OCI-LY7 (cell line): ENCODE measurements at regions of chr10 and their contacts with region 1.

Region 1: DNA sequence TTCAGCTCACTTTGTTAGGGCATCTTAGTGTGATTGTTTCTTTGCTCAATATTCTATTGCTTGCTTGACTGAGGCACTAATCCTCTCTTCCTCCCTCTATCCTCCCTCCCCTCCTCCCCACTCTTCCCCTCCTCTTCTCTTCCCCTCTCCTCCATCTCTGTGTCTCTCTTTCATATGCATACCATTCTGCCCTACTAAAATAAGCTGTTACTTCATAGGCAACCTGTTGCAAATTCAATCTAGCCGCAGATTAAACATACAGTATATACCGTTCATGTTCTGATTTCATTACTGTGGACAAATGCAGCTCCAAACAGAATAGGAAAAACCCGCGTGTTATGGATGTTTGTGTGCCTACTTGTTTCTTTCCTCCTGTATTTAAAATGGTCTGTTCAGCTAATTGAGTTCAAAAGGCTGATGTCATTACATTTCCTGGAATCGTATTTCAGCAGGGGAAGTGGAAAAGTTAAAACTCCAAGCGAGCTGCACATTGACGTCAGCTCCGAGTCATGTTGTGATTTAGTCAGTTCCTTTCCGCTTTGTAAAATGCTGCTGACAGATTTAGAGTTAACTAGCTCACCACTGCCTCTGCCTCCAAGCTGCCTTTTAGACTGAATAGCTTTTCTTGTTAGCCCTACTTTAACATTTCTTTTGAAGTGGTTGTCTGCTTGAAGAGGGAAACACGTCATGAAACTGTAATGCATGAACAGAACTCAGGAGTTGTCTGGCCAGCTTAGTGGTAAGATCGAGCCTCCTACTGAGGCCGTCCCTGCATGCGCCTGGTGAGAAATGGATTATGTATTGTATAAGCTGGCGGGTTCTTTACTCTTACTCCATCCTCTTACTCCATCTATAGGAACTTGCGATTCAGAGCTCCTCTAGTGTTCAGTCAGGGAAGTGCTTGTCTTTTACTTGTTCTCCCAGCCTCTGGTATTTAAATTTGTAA is 69.0 kb downstream of the CREM start:
- DNase-seq: peak; percentile 91
- H3K4me3 ChIP-seq: peak overlapping the region; percentile 67
- H3K27ac ChIP-seq: peak overlapping the region; percentile 88
- H3K4me1 ChIP-seq: peaks cover 24% of the 10 kb centered on the region
- CTCF ChIP-seq: peak; percentile 91

Region 2: GRCh38 chr10:35126530-35127296 is 68.9 kb before region 1 on chr10 and contains the start of gene CREM:
- CTCF ChIA-PET with region 1: interaction called, 22 read pairs
- POLR2A ChIA-PET with region 1: interaction called, 95 read pairs
- intact Hi-C with region 1: loop called (anchors 1 kb)
- DNase-seq: peak; percentile 98
- H3K4me3 ChIP-seq: peak within 1 kb of the TSS; percentile 93
- H3K27ac ChIP-seq: peak within 1 kb of the TSS; percentile 85
- H3K4me1 ChIP-seq: peaks cover 43% of the 10 kb centered on the region
- CTCF ChIP-seq: peak; percentile 82
- total RNA-seq, gene CREM: 31.9 and 38.1 TPM in 2 replicates

Region 3: DNA sequence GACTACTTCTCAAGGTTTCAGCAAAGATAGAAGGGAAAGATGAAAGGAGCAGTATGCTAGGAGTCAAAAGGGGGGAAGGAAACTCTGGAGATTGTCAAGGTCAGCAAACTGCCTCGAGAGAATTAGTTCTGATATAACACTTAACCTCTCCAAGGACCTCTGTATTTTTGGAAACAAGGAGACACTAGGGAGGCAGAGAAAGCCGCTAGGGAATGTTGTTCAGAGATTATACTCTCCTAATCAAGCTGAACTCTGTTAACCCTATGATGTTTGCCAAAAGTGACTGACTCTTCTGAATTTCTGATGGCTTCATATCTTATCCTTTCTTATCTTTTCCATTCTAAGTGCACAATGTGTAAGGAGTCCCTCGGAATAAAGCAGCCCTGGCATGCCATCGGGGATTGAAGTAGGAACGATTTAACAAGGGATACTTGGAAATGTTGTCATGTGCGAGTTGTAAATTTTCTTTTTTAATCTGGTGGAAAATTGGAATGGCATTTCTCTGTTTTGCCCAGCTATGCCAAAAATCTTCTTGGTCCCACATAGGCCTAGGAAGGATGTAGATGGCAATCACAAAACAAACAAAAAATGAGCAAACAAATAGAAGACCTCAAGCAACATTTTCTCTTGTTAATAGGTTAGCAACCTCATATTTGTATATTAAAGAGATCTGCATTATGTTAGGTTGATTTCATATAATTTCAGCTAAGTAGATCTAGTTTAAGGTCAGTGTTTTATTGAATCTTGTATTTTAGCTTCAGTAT is 41.7 kb before region 1 on chr10:
- CTCF ChIA-PET with region 1: interaction called, 8 read pairs
- POLR2A ChIA-PET with region 1: interaction called, 26 read pairs
- intact Hi-C with region 1: loop called (anchors 1 kb)
- DNase-seq: no peak
- H3K4me3 ChIP-seq: no peak overlapping the region
- H3K27ac ChIP-seq: no peak overlapping the region
- H3K4me1 ChIP-seq: peaks cover 34% of the 10 kb centered on the region
- CTCF ChIP-seq: no peak

Region 4: GRCh38 chr10:35184527-35185171 is 11.0 kb before region 1 on chr10:
- CTCF ChIA-PET with region 1: interaction called, 4 read pairs
- POLR2A ChIA-PET with region 1: interaction called, 27 read pairs
- intact Hi-C with region 1: no loop called
- DNase-seq: peak; percentile 10
- H3K4me3 ChIP-seq: no peak overlapping the region
- H3K27ac ChIP-seq: no peak overlapping the region
- H3K4me1 ChIP-seq: peaks cover 9% of the 10 kb centered on the region
- CTCF ChIP-seq: no peak

Region 5: DNA sequence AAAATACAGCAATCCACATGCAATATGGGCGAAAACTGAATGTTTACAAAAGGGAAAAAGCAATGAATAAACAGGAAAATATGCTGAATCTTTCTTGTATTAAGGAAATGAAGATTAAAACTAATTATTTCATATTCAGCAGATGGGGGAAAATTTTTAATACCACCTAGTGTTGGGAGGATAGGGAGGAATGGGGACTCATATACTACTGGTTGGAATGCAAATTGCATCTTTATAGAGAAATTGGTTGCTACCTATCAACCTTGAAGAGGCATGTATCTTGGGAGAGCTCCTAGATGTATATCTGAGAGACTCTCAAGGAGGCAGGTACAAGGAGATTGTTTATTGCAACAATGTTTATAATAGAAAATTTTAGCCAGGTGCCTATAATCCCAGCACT is 32.4 kb after region 1 on chr10:
- CTCF ChIA-PET with region 1: no interaction called
- POLR2A ChIA-PET with region 1: no interaction called
- intact Hi-C with region 1: no loop called
- DNase-seq: no peak
- H3K4me3 ChIP-seq: no peak overlapping the region
- H3K27ac ChIP-seq: no peak overlapping the region
- H3K4me1 ChIP-seq: no peaks in the 10 kb centered on the region
- CTCF ChIP-seq: no peak